Caco-2 (cell line): ENCODE measurements at regions of chr6 and their contacts with region 1.

Region 1: GRCh38 chr6:136846046-136846445 is 23.7 kb downstream of the PEX7 start:
- DNase-seq: peak in 1 of 2 experiments; percentile 48
- H3K4me3 ChIP-seq: no peak overlapping the region
- H3K4me3 Mint-ChIP-seq: no peak overlapping the region
- H3K27ac Mint-ChIP-seq: no peak overlapping the region
- H3K4me1 ChIP-seq: no peaks in the 10 kb centered on the region
- H3K4me1 Mint-ChIP-seq: peaks cover 7% of the 10 kb centered on the region
- H3K27me3 ChIP-seq: no peaks in the 10 kb centered on the region
- H3K27me3 Mint-ChIP-seq: no peaks in the 10 kb centered on the region
- CTCF ChIP-seq: peak; percentile 61 to 67

Region 2: DNA sequence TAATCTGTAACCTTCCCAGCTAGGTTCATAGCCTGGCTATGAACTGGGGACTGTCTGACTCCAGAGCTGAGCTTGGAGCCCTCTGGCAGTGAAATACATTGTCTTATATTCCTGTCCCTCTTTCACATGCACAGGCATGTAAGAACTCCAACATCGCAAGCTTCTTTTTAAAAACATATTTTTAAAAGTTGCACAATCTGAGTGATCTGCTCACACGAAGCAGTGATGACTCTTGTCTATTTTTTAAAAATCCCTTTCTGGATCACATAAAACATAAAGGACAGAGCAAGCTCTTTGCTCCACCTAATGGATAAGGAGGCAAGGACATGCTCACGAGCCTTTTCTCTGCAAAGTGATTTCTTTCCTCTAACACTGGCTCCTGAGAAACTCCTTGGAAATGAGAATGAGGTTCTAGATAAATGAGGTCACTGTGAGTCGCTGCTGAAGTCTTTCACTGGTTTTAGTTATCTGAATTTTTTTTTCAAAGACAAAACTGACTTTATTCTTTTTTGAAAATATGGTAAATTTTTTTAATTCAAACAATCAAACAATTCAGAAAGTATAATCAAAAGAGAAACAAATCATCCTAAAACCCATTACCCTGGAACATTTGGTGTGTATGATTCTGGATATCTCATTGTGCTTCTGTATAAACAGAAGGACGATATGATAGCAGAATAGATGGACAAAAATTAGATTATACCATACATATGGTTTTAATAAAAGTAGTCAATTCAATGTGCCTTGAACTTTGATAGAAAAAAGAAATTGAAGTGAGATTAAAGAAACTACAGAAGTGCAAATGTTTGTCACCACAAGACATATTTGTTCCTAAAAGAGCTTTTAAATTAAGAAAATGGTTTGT is 167.9 kb after region 1 on chr6:
- CTCF ChIA-PET with region 1: interaction called, 3 read pairs
- POLR2A ChIA-PET with region 1: no interaction called
- intact Hi-C with region 1: loop called (anchors 5 kb)
- DNase-seq: peak in 1 of 2 experiments; percentile 43
- H3K4me3 ChIP-seq: no peak overlapping the region
- H3K4me3 Mint-ChIP-seq: no peak overlapping the region
- H3K27ac Mint-ChIP-seq: no peak overlapping the region
- H3K4me1 ChIP-seq: peaks cover 21% of the 10 kb centered on the region
- H3K4me1 Mint-ChIP-seq: peaks cover 14% of the 10 kb centered on the region
- H3K27me3 ChIP-seq: no peaks in the 10 kb centered on the region
- H3K27me3 Mint-ChIP-seq: no peaks in the 10 kb centered on the region
- CTCF ChIP-seq: peak; percentile 41 to 63